Activated CD8-positive, alpha-beta T cell treated with anti-CD3 and anti-CD28 coated beads for 36 hours (primary cell): ENCODE measurements at regions of chr4 and their contacts with region 1.

Region 1: GRCh38 chr4:139295206-139295941 is 5.9 kb upstream of the NAA15 start:
- DNase-seq: peak; percentile 99
- ATAC-seq: peak; percentile 91
- H3K4me3 Mint-ChIP-seq: peak overlapping the region; percentile 98
- H3K27ac Mint-ChIP-seq: peak overlapping the region; percentile 98
- H3K4me1 Mint-ChIP-seq: peaks cover 46% of the 10 kb centered on the region
- H3K27me3 Mint-ChIP-seq: no peaks in the 10 kb centered on the region
- CTCF ChIP-seq: peak; percentile 92

Region 2: GRCh38 chr4:139099366-139099982 is 195.9 kb before region 1 on chr4:
- CTCF ChIA-PET with region 1: interaction called, 31 read pairs
- POLR2A ChIA-PET with region 1: no interaction called
- intact Hi-C with region 1: loop called (anchors 5 kb)
- DNase-seq: peak; percentile 81
- ATAC-seq: peak; percentile 70
- H3K4me3 Mint-ChIP-seq: no peak overlapping the region
- H3K27ac Mint-ChIP-seq: no peak overlapping the region
- H3K4me1 Mint-ChIP-seq: no peaks in the 10 kb centered on the region
- H3K27me3 Mint-ChIP-seq: no peaks in the 10 kb centered on the region
- CTCF ChIP-seq: peak; percentile 86

Region 3: GRCh38 chr4:139177868-139178611 is 117.3 kb before region 1 on chr4:
- CTCF ChIA-PET with region 1: interaction called, 12 read pairs
- POLR2A ChIA-PET with region 1: interaction called, 7 read pairs
- intact Hi-C with region 1: loop called (anchors 5 kb)
- DNase-seq: peak; percentile 91
- ATAC-seq: peak; percentile 81
- H3K4me3 Mint-ChIP-seq: peak overlapping the region; percentile 82
- H3K27ac Mint-ChIP-seq: peak overlapping the region; percentile 85
- H3K4me1 Mint-ChIP-seq: peaks cover 13% of the 10 kb centered on the region
- H3K27me3 Mint-ChIP-seq: peaks cover 14% of the 10 kb centered on the region
- CTCF ChIP-seq: no peak

Region 4: DNA sequence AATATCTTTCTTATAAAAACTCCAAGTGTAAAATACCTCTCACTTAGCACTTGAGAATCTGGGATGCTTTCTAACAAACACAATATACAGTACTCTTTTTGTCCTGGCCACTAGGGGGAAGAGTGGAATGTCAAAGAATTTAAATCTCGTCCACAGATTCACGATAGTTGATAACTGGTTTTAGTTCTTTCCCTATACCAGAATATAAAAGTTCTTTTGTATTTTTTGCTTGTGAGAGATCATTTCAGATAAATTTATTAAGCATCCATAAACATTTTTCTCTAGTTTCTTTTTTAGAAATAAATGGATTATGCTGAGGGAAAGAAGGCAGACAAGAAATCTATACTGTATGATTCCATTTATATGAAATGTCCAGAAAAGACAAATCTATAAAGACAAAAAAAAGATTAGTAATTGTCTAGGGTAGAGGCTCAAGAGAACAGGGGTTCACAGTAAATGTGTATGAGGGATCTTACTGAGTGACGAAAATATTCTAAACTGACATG is 65.8 kb before region 1 on chr4:
- CTCF ChIA-PET with region 1: interaction called, 15 read pairs
- POLR2A ChIA-PET with region 1: interaction called, 4 read pairs
- intact Hi-C with region 1: loop called (anchors 1 kb)
- DNase-seq: no peak
- ATAC-seq: no peak
- H3K4me3 Mint-ChIP-seq: no peak overlapping the region
- H3K27ac Mint-ChIP-seq: no peak overlapping the region
- H3K4me1 Mint-ChIP-seq: no peaks in the 10 kb centered on the region
- H3K27me3 Mint-ChIP-seq: no peaks in the 10 kb centered on the region
- CTCF ChIP-seq: peak; percentile 70

Region 5: GRCh38 chr4:139266583-139267257 is 28.7 kb before region 1 on chr4:
- CTCF ChIA-PET with region 1: interaction called, 15 read pairs
- POLR2A ChIA-PET with region 1: interaction called, 11 read pairs
- intact Hi-C with region 1: no loop called
- DNase-seq: peak; percentile 96
- ATAC-seq: peak; percentile 97
- H3K4me3 Mint-ChIP-seq: peak overlapping the region; percentile 31
- H3K27ac Mint-ChIP-seq: peak overlapping the region; percentile 62
- H3K4me1 Mint-ChIP-seq: peaks cover 22% of the 10 kb centered on the region
- H3K27me3 Mint-ChIP-seq: no peaks in the 10 kb centered on the region
- CTCF ChIP-seq: no peak

Region 6: DNA sequence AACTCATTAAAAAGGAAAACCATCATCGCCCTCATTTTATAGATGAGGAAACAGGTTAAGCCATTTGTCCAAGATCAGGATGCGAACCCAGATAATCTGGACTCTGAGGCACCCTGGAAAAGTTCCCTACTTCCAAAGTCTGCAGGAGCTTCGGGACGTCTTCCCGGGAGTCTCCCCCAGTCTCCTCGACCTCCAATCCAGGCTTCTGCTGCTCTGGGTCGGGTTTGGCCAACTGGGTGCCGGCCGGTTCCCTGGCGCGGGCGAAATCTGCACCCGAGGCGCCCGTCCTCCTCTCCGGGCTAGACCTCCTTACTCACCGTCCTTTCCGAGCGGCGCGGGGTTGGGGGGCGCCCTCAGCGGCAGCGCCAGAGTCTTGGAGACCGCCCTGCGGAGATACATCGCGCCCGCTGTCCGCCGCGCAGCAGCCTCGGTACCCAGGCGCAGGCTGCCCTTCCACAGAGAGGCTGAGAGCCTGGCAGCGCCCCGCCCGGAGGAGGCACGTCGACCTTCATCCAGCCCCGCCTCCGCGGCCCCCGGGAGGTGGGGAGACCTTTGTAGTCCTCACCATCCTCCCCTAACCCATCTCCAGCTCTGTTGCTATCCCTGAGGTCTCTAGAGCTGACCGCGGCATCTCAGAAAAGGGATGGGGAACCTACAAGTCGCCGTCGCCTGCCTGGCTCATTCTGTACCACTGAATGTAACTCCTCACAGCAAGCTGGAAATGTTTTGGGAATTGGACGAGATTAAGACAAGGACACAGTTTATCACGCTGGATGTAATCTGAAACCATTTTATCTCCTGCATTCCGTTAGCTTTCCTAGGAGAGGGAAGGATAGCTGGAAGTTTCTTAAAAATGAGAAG is 15.4 kb before region 1 on chr4 and contains the start of gene MGARP:
- CTCF ChIA-PET with region 1: interaction called, 12 read pairs
- POLR2A ChIA-PET with region 1: no interaction called
- intact Hi-C with region 1: no loop called
- DNase-seq: peak; percentile 38
- ATAC-seq: peak; percentile 84
- H3K4me3 Mint-ChIP-seq: peak within 1 kb of the TSS; percentile 72
- H3K27ac Mint-ChIP-seq: no peak within 1 kb of the TSS
- H3K4me1 Mint-ChIP-seq: peaks cover 13% of the 10 kb centered on the region
- H3K27me3 Mint-ChIP-seq: peaks cover 36% of the 10 kb centered on the region
- CTCF ChIP-seq: no peak
- total RNA-seq, gene MGARP: 0.22 to 0.32 TPM